ENCODE measurements at regions of chr15 and their contacts with region 1.

Region 1: GRCh38 chr15:34514251-34514670 is 69.2 kb downstream of the GOLGA8B start:
- DNase-seq: peak in 1 of 5 donors; percentile 21
- H3K4me3 ChIP-seq: no peak overlapping the region
- H3K4me3 Mint-ChIP-seq: peak overlapping the region in 6 of 7 donors; percentile 50 to 95 (median 83)
- H3K27ac ChIP-seq: no peak overlapping the region
- H3K27ac Mint-ChIP-seq: no peak overlapping the region
- H3K4me1 ChIP-seq: no peaks in the 10 kb centered on the region
- H3K4me1 Mint-ChIP-seq: peaks cover 7 to 25% (median 11%) of the 10 kb centered on the region in 3 donors
- H3K27me3 ChIP-seq: peaks cover 18% of the 10 kb centered on the region
- H3K27me3 Mint-ChIP-seq: peaks cover 46 to 56% of the 10 kb centered on the region in 2 donors

Region 2: DNA sequence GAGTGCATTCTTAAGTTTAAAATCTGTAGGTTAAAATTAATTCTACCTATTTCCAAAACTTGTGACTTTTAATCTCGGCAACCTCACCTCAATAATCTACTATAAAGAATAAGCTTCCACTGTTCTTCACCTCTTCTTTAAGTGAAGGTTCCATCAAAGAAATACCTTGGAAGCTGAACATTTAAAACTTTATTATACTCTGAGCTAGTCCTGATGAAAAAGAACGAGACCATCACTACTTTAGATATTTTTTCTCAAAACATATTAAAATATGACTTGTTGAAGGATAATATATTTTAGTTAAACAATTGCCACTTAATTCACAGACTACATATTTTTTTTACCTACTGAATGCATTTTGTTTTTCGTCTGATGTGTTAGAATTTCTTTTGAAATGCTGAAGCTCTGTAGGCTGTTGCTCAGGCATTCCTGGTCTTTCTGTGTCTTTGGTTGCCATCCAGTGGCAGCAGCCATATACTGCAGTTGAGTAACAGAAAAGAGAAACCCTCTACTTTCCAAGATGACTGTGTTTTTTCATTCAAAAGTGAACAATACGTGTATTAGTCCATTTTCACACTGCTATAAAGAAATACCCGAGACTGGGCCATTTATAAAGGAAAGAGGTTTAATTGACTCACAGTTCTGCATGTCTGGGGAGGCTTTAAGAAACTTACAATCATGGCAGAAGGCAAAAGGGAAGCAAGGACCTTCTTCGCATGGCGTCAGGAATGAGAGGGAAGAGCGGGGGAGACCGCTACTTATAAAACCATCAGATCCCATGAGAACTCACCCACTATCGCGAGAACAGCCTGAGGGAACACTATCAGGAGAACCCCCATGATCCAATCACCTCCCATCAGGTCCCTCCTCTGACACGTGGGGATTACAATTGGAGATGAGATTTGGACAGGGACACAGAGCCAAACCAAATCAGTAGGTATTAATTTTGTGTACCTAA is 73.7 kb after region 1 on chr15:
- CTCF ChIA-PET with region 1: interaction called, 11 read pairs
- POLR2A ChIA-PET with region 1: interaction called, 5 read pairs
- DNase-seq: peak; percentile 31 to 73 (median 57)
- H3K4me3 ChIP-seq: peak overlapping the region; percentile 16
- H3K4me3 Mint-ChIP-seq: peak overlapping the region; percentile 26 to 72 (median 57)
- H3K27ac ChIP-seq: no peak overlapping the region
- H3K27ac Mint-ChIP-seq: peak overlapping the region in 4 of 8 donors; percentile 13 to 83 (median 47)
- H3K4me1 ChIP-seq: peaks cover 9% of the 10 kb centered on the region
- H3K4me1 Mint-ChIP-seq: peaks cover 5 to 11% (median 6%) of the 10 kb centered on the region in 3 donors
- H3K27me3 ChIP-seq: no peaks in the 10 kb centered on the region
- H3K27me3 Mint-ChIP-seq: peaks cover 12 to 14% of the 10 kb centered on the region in 2 donors

Region 3: GRCh38 chr15:34726406-34727100 is 212.3 kb after region 1 on chr15:
- CTCF ChIA-PET with region 1: no interaction called
- POLR2A ChIA-PET with region 1: no interaction called
- DNase-seq: no peak
- H3K4me3 ChIP-seq: no peak overlapping the region
- H3K4me3 Mint-ChIP-seq: no peak overlapping the region
- H3K27ac ChIP-seq: no peak overlapping the region
- H3K27ac Mint-ChIP-seq: no peak overlapping the region
- H3K4me1 ChIP-seq: no peaks in the 10 kb centered on the region
- H3K4me1 Mint-ChIP-seq: peaks cover 0 to 6% (median 0%) of the 10 kb centered on the region in 3 donors
- H3K27me3 ChIP-seq: peaks cover 6% of the 10 kb centered on the region
- H3K27me3 Mint-ChIP-seq: peaks cover 20 to 41% of the 10 kb centered on the region in 2 donors